WTC11 (cell line): ENCODE measurements at regions of chr19 and their contacts with region 1.

Region 1: DNA sequence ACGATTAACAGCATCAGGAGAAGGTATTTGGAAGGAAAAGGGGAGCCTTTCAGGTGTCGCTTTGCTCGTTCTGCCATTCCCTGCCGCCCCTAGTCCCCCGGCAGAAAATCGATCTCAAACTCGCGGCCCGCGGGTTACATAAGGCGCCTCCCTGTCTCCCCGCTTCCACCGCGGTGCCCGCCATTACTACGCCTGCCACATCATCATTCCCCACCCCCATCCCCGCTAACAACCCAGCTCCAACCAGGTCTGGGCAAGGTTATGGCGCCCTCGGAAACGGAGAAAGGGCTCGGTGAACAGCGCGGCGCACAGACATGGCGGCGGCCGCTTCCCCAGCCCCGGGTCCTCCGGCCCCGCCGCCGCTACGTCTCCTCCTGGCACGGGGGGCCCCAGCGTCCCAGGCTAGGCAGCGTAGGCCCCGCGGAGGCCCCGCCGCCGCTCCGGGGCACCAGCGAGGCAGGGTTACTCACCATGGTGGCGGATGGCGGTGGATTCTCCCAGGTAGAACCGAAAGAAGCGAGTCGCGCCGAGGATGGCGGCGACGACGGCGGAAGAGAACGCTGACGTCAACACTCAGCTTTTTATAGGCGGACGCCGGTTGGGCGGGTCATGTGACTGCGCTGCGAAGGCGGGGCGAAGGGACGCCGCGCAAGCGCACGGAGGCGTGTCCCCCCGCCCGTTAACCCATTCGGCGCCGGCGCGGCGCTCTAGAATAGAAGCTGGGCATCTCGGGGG is at the start of gene EEF2:
- DNase-seq: peak; percentile 91
- ATAC-seq: 0 out of 2 replicates have a peak, but pooled peaks have one; percentile 5
- H3K4me3 Mint-ChIP-seq: peak within 1 kb of the TSS; percentile 96
- H3K27ac Mint-ChIP-seq: peak within 1 kb of the TSS; percentile 98
- H3K4me1 Mint-ChIP-seq: peaks cover 39% of the 10 kb centered on the region
- H3K27me3 Mint-ChIP-seq: peaks cover 7% of the 10 kb centered on the region
- CTCF ChIP-seq: no peak
- total RNA-seq, gene EEF2: 3,572 to 3,864 TPM (median 3,852 TPM) in 3 replicates

Region 2: GRCh38 chr19:3762501-3763459 is 222.3 kb before region 1 on chr19 and contains the start of gene MRPL54:
- CTCF ChIA-PET with region 1: interaction called, 18 read pairs
- POLR2A ChIA-PET with region 1: interaction called, 6 read pairs
- DNase-seq: peak; percentile 99
- ATAC-seq: peak; percentile 91
- H3K4me3 Mint-ChIP-seq: peak within 1 kb of the TSS; percentile 97
- H3K27ac Mint-ChIP-seq: peak within 1 kb of the TSS; percentile 95
- H3K4me1 Mint-ChIP-seq: peaks cover 8% of the 10 kb centered on the region
- H3K27me3 Mint-ChIP-seq: peaks cover 3% of the 10 kb centered on the region; the same call in 1 of the 2 replicates
- CTCF ChIP-seq: no peak
- total RNA-seq, gene MRPL54: 60.9 to 65.3 TPM (median 62.3 TPM) in 3 replicates

Region 3: DNA sequence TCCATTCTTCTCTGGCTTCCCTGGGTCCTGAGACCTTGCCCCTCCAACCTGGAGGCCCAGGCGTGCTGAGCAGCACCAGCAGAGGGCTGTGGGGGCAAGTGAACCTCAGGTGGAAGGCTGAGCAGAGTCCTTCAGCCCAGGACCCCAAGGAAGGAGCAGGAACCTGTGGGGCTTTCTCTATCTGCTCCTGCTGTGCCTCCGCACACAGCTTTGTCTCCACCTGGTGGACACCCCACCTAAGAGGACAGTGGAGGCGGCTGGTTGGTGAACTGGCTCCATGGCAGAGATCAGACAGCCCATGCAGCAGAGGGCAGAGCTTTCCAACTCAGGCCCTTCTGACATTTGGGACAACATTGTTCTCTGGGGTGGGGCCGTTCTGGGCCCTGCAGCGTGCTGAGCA is 136.0 kb before region 1 on chr19:
- CTCF ChIA-PET with region 1: interaction called, 10 read pairs
- POLR2A ChIA-PET with region 1: no interaction called
- DNase-seq: peak; percentile 33
- ATAC-seq: peak; percentile 75
- H3K4me3 Mint-ChIP-seq: no peak overlapping the region
- H3K27ac Mint-ChIP-seq: no peak overlapping the region
- H3K4me1 Mint-ChIP-seq: no peaks in the 10 kb centered on the region
- H3K27me3 Mint-ChIP-seq: peaks cover 11% of the 10 kb centered on the region
- CTCF ChIP-seq: no peak

Region 4: GRCh38 chr19:3880471-3881271 is 104.4 kb before region 1 on chr19 and contains the start of gene ATCAY:
- CTCF ChIA-PET with region 1: interaction called, 28 read pairs
- POLR2A ChIA-PET with region 1: interaction called, 3 read pairs
- DNase-seq: peak; percentile 69
- ATAC-seq: peak; percentile 71
- H3K4me3 Mint-ChIP-seq: peak within 1 kb of the TSS; percentile 85
- H3K27ac Mint-ChIP-seq: peak within 1 kb of the TSS; percentile 54; the same call in 1 of the 2 replicates
- H3K4me1 Mint-ChIP-seq: peaks cover 13% of the 10 kb centered on the region; the same call in 1 of the 2 replicates
- H3K27me3 Mint-ChIP-seq: peaks cover 10% of the 10 kb centered on the region
- CTCF ChIP-seq: no peak
- total RNA-seq, gene ATCAY: 21.1 to 23.5 TPM (median 21.3 TPM) in 3 replicates

Region 5: GRCh38 chr19:3970808-3971598 is 14.1 kb before region 1 on chr19 and contains the start of gene DAPK3:
- CTCF ChIA-PET with region 1: interaction called, 49 read pairs
- POLR2A ChIA-PET with region 1: interaction called, 142 read pairs
- DNase-seq: peak; percentile 98
- ATAC-seq: peak; percentile 65
- H3K4me3 Mint-ChIP-seq: peak within 1 kb of the TSS; percentile 96
- H3K27ac Mint-ChIP-seq: peak within 1 kb of the TSS; percentile 100
- H3K4me1 Mint-ChIP-seq: peaks cover 26% of the 10 kb centered on the region
- H3K27me3 Mint-ChIP-seq: no peaks in the 10 kb centered on the region; the same call in 1 of the 2 replicates
- CTCF ChIP-seq: no peak
- total RNA-seq, gene DAPK3: 61.5 to 73.5 TPM (median 68.4 TPM) in 3 replicates

Region 6: GRCh38 chr19:4007021-4007835 is 22.2 kb after region 1 on chr19 and contains the start of gene PIAS4:
- CTCF ChIA-PET with region 1: interaction called, 36 read pairs
- POLR2A ChIA-PET with region 1: interaction called, 12 read pairs
- DNase-seq: peak; percentile 95
- ATAC-seq: peak; percentile 94
- H3K4me3 Mint-ChIP-seq: peak within 1 kb of the TSS; percentile 88
- H3K27ac Mint-ChIP-seq: peak within 1 kb of the TSS; percentile 87; the same call in 1 of the 2 replicates
- H3K4me1 Mint-ChIP-seq: peaks cover 14% of the 10 kb centered on the region
- H3K27me3 Mint-ChIP-seq: no peaks in the 10 kb centered on the region
- CTCF ChIP-seq: no peak
- total RNA-seq, gene PIAS4: 45.5 to 46.0 TPM (median 45.9 TPM) in 3 replicates

Region 7: DNA sequence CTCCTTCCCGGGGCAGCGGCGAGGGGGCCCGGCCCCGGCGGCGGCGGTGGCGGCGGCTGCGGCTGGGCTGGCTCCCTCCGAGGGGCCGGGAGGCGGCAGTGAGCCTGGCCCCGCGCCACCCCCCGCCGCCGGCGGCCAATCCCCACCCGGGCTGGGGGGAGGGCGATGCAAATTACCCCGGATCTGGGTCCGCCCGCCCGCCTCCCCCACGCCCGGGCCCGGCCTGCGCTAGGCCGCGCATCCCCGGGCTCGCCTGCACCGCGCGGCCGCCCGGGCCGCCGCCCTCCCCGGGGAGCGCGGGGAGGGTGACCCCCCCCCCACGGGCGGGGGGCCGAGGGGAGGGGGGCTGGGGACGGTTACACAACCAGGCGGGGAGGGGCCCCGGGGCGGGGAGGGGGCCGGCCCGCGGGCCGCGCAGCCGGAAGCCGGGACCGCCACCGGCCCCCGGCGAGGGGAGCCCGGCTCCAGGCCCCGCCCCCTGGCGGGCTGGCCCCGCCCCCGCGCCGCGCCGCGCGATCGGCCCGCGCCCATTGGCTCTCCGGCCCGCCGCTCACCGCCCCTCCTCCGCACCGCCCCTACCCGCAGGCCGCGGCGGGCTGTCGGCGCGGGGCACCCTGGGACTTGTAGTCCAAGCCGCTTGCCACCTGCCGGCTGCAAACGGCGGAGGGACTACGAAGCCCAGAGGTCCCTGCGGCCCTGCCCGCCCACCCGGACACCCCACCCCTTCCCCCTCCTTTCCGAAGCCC is 80.5 kb after region 1 on chr19:
- CTCF ChIA-PET with region 1: interaction called, 14 read pairs
- POLR2A ChIA-PET with region 1: no interaction called
- DNase-seq: peak; percentile 97
- ATAC-seq: peak; percentile 81
- H3K4me3 Mint-ChIP-seq: no peak overlapping the region
- H3K27ac Mint-ChIP-seq: no peak overlapping the region
- H3K4me1 Mint-ChIP-seq: peaks cover 26% of the 10 kb centered on the region
- H3K27me3 Mint-ChIP-seq: peaks cover 26% of the 10 kb centered on the region
- CTCF ChIP-seq: no peak